Activated CD4-positive, alpha-beta memory T cell treated with anti-CD3 and anti-CD28 coated beads for 36 hours (primary cell): ENCODE measurements at regions of chr19 and their contacts with region 1.

Region 1: GRCh38 chr19:47725759-47726401 is 12.7 kb downstream of the EHD2 start:
- DNase-seq: no peak
- H3K4me3 Mint-ChIP-seq: no peak overlapping the region
- H3K27ac Mint-ChIP-seq: no peak overlapping the region
- H3K4me1 Mint-ChIP-seq: peaks cover 20% of the 10 kb centered on the region
- H3K27me3 Mint-ChIP-seq: peaks cover 29% of the 10 kb centered on the region

Region 2: GRCh38 chr19:47663841-47664771 is 61.8 kb before region 1 on chr19:
- CTCF ChIA-PET with region 1: no interaction called
- POLR2A ChIA-PET with region 1: no interaction called
- intact Hi-C with region 1: no loop called
- DNase-seq: no peak
- H3K4me3 Mint-ChIP-seq: no peak overlapping the region
- H3K27ac Mint-ChIP-seq: no peak overlapping the region
- H3K4me1 Mint-ChIP-seq: peaks cover 7% of the 10 kb centered on the region
- H3K27me3 Mint-ChIP-seq: no peaks in the 10 kb centered on the region

Region 3: GRCh38 chr19:47707135-47707925 is 18.6 kb before region 1 on chr19:
- CTCF ChIA-PET with region 1: interaction called, 28 read pairs
- POLR2A ChIA-PET with region 1: no interaction called
- intact Hi-C with region 1: no loop called
- DNase-seq: peak; percentile 88
- H3K4me3 Mint-ChIP-seq: no peak overlapping the region
- H3K27ac Mint-ChIP-seq: no peak overlapping the region
- H3K4me1 Mint-ChIP-seq: no peaks in the 10 kb centered on the region
- H3K27me3 Mint-ChIP-seq: peaks cover 6% of the 10 kb centered on the region

Region 4: GRCh38 chr19:47713046-47714021 is 12.5 kb before region 1 on chr19 and contains the start of gene EHD2:
- CTCF ChIA-PET with region 1: interaction called, 28 read pairs
- POLR2A ChIA-PET with region 1: no interaction called
- intact Hi-C with region 1: no loop called
- DNase-seq: peak; percentile 64
- H3K4me3 Mint-ChIP-seq: peak within 1 kb of the TSS; percentile 14
- H3K27ac Mint-ChIP-seq: no peak within 1 kb of the TSS
- H3K4me1 Mint-ChIP-seq: no peaks in the 10 kb centered on the region
- H3K27me3 Mint-ChIP-seq: peaks cover 26% of the 10 kb centered on the region
- total RNA-seq, gene EHD2: 0.81 to 1.6 TPM

Region 5: DNA sequence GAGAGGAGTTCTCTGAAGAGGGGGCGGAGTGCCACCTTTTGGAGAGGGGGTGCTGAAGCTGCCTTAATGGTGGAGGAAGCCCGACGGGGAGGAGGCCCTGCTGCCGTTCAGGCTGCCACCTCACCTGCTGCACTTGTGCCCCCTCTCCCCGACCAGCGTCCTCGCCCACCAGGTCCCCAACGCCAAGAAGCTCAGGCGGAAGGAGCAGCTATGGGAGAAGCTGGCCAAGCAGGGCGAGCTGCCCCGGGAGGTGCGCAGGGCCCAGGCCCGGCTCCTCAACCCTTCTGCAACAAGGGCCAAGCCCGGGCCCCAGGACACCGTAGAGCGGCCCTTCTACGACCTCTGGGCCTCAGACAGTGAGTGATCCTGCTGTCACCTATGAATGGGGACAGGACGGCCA is 24.9 kb after region 1 on chr19:
- CTCF ChIA-PET with region 1: no interaction called
- POLR2A ChIA-PET with region 1: no interaction called
- intact Hi-C with region 1: no loop called
- DNase-seq: no peak
- H3K4me3 Mint-ChIP-seq: no peak overlapping the region
- H3K27ac Mint-ChIP-seq: no peak overlapping the region
- H3K4me1 Mint-ChIP-seq: peaks cover 25% of the 10 kb centered on the region
- H3K27me3 Mint-ChIP-seq: no peaks in the 10 kb centered on the region